ENCODE measurements at regions of chr19 and their contacts with region 1.

Region 1: GRCh38 chr19:37893845-37894575 is 12.4 kb downstream of the WDR87 start:
- DNase-seq: no peak
- ATAC-seq: no peak
- H3K4me3 ChIP-seq: no peak overlapping the region
- H3K27ac ChIP-seq: no peak overlapping the region
- H3K4me1 ChIP-seq: no peaks in the 10 kb centered on the region
- H3K27me3 ChIP-seq: peaks cover 15% of the 10 kb centered on the region; the same call in 1 of the 2 replicates
- CTCF ChIP-seq: no peak

Region 2: DNA sequence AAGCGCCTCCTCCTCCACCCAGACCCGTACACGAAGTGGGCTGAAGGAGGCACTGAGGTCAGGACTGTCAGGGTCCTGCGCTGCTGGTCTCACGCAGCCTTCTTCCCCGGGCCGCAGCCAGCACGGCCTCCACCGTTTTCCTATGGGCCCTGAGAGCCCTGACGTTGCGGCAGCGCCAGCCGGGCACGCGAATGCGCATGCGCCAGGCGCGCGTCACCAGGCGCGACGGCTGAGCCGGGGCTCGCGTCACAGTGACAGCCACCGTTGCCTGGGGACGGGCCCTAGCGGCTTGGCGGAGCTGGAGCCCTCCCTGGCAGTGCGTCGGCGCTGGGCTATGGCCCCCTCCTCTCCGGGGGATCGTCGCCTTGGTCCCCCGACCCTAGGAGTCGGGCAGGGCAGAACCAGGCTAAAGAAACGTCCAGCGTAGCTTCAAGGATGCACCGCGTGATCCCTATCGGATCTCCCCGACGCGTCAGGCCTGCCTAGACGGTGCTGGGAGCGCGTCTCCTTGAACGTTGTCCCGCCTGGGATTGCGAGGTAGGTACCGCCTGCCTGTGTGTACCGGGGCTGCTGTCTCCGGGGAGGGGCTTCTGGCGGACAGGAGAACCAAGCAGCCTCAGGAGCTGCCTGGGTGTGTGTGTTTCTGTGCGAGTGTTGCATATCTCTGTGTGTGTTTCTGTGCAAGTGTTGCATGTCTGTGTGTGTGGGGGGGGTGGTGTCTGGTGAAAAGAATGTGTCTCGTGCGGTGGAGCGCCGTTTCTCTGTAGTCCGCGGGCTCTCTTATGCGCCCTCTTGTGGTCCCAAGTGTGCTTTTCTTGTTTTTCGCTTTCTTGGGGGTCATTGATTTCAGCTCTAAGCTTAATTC is 342.6 kb before region 1 on chr19:
- CTCF ChIA-PET with region 1: no interaction called
- POLR2A ChIA-PET with region 1: no interaction called
- in situ Hi-C with region 1: no loop called
- intact Hi-C with region 1: no loop called
- DNase-seq: no peak
- ATAC-seq: no peak
- H3K4me3 ChIP-seq: peak overlapping the region in 1 of 2 experiments; percentile 13; a peak in 1 of 4 replicates
- H3K27ac ChIP-seq: no peak overlapping the region
- H3K4me1 ChIP-seq: no peaks in the 10 kb centered on the region
- H3K27me3 ChIP-seq: no peaks in the 10 kb centered on the region
- CTCF ChIP-seq: no peak

Region 3: DNA sequence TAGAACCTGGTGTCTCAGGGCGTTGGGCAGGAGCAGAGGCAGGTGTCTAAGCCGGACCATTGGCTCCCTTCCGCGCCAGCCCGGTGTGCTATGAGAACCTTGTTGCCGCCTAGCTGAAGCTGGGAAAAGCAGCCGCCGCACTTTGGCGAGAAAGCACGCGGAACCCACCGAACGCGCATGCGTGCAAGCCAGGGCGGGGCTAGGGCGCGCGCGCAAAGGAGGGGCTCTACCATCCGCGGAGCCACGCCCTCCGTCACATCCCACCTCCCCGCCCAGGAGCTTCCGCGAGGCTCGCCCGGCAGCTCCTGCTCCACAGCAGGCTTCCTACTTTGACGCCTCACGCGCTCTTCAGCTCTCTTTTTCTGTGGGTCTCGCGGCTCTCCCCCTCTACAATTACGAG is 38.9 kb before region 1 on chr19:
- CTCF ChIA-PET with region 1: no interaction called
- POLR2A ChIA-PET with region 1: no interaction called
- in situ Hi-C with region 1: no loop called
- intact Hi-C with region 1: no loop called
- DNase-seq: no peak
- ATAC-seq: no peak
- H3K4me3 ChIP-seq: no peak overlapping the region
- H3K27ac ChIP-seq: no peak overlapping the region
- H3K4me1 ChIP-seq: no peaks in the 10 kb centered on the region
- H3K27me3 ChIP-seq: no peaks in the 10 kb centered on the region
- CTCF ChIP-seq: no peak

Region 4: GRCh38 chr19:37928527-37929286 is 34.7 kb after region 1 on chr19:
- CTCF ChIA-PET with region 1: no interaction called
- POLR2A ChIA-PET with region 1: no interaction called
- in situ Hi-C with region 1: no loop called
- intact Hi-C with region 1: no loop called
- DNase-seq: no peak
- ATAC-seq: no peak
- H3K4me3 ChIP-seq: no peak overlapping the region
- H3K27ac ChIP-seq: no peak overlapping the region
- H3K4me1 ChIP-seq: peaks cover 27% of the 10 kb centered on the region
- H3K27me3 ChIP-seq: no peaks in the 10 kb centered on the region
- CTCF ChIP-seq: no peak

Region 5: DNA sequence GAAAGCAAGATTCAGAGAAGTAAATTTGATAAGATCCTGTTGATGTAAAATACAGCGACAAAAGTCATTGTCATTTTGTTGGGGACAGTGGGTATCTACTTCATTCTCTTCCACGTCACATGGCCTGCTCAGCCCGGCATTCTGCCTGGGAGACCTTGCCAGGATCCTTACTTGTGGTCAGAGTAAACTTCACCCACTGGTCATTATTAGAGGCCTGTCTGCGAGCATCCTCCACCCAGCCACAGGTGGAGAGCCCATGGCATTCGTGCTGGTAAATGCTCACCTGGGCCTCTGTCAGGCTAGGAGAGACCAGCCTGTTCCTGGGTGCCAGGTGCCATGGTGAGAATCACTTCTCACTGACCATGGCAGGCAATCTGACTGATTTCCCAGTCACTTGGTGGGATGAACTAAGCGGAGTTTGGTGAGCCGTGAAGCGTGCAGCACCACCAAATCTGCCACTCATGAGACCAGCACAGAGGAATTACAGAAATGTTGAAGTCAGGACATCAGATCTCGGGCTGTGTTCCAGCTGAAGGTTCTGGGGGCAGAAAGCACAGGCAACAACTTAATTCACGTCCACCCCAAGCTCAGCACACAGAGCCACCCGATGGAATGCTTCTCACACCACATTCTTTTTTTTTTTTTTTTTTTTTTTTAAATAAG is 120.0 kb after region 1 on chr19:
- CTCF ChIA-PET with region 1: no interaction called
- POLR2A ChIA-PET with region 1: interaction called, 10 read pairs
- in situ Hi-C with region 1: no loop called
- intact Hi-C with region 1: no loop called
- DNase-seq: no peak
- ATAC-seq: no peak
- H3K4me3 ChIP-seq: no peak overlapping the region
- H3K27ac ChIP-seq: no peak overlapping the region
- H3K4me1 ChIP-seq: no peaks in the 10 kb centered on the region
- H3K27me3 ChIP-seq: no peaks in the 10 kb centered on the region
- CTCF ChIP-seq: no peak

Measured in Panc1 (cell line).